ENCODE measurements at regions of chr7 and their contacts with region 1.

Region 1: GRCh38 chr7:111474723-111475418 is 87.4 kb downstream of the IMMP2L start:
- DNase-seq: peak; percentile 77 to 94 (median 88)
- ATAC-seq: peak; percentile 78
- H3K4me3 ChIP-seq: no peak overlapping the region
- H3K27ac ChIP-seq: peak overlapping the region; percentile 68
- H3K4me1 ChIP-seq: peaks cover 6 to 47% of the 10 kb centered on the region in 2 experiments; a peak in 4 of 5 replicates
- H3K27me3 ChIP-seq: no peaks in the 10 kb centered on the region
- CTCF ChIP-seq: no peak
- EP300 ChIP-seq: peak; percentile 99
- POLR2A ChIP-seq: no peak
- RAD21 ChIP-seq: 0 out of 4 replicates have a peak, but pooled peaks of 1 of the 2 experiments have one; percentile 14

Region 2: GRCh38 chr7:111229916-111230315 is 245.0 kb before region 1 on chr7:
- CTCF ChIA-PET with region 1: no interaction called
- POLR2A ChIA-PET with region 1: no interaction called
- in situ Hi-C with region 1: no loop called
- intact Hi-C with region 1: loop called (anchors 5 kb)
- DNase-seq: no peak
- ATAC-seq: no peak
- H3K4me3 ChIP-seq: no peak overlapping the region
- H3K27ac ChIP-seq: no peak overlapping the region
- H3K4me1 ChIP-seq: peaks cover 0 to 21% of the 10 kb centered on the region in 2 experiments; a peak in 3 of 5 replicates
- H3K27me3 ChIP-seq: no peaks in the 10 kb centered on the region
- CTCF ChIP-seq: no peak
- EP300 ChIP-seq: no peak
- POLR2A ChIP-seq: no peak
- RAD21 ChIP-seq: no peak

Region 3: GRCh38 chr7:111329367-111330234 is 145.3 kb before region 1 on chr7:
- CTCF ChIA-PET with region 1: no interaction called
- POLR2A ChIA-PET with region 1: interaction called, 3 read pairs
- in situ Hi-C with region 1: no loop called
- intact Hi-C with region 1: loop called (anchors 2 kb)
- DNase-seq: peak in 2 of 4 experiments; percentile 41 to 64
- ATAC-seq: peak; percentile 82
- H3K4me3 ChIP-seq: peak overlapping the region; percentile 24
- H3K27ac ChIP-seq: peak overlapping the region; percentile 78
- H3K4me1 ChIP-seq: peaks cover 0 to 4% of the 10 kb centered on the region in 2 experiments; a peak in 1 of 5 replicates
- H3K27me3 ChIP-seq: no peaks in the 10 kb centered on the region
- CTCF ChIP-seq: peak; percentile 31 to 74 (median 45); a peak in 5 of 6 replicates
- EP300 ChIP-seq: peak; percentile 33; the same call in 1 of the 2 replicates
- POLR2A ChIP-seq: no peak
- RAD21 ChIP-seq: peak; percentile 83 to 91

Region 4: DNA sequence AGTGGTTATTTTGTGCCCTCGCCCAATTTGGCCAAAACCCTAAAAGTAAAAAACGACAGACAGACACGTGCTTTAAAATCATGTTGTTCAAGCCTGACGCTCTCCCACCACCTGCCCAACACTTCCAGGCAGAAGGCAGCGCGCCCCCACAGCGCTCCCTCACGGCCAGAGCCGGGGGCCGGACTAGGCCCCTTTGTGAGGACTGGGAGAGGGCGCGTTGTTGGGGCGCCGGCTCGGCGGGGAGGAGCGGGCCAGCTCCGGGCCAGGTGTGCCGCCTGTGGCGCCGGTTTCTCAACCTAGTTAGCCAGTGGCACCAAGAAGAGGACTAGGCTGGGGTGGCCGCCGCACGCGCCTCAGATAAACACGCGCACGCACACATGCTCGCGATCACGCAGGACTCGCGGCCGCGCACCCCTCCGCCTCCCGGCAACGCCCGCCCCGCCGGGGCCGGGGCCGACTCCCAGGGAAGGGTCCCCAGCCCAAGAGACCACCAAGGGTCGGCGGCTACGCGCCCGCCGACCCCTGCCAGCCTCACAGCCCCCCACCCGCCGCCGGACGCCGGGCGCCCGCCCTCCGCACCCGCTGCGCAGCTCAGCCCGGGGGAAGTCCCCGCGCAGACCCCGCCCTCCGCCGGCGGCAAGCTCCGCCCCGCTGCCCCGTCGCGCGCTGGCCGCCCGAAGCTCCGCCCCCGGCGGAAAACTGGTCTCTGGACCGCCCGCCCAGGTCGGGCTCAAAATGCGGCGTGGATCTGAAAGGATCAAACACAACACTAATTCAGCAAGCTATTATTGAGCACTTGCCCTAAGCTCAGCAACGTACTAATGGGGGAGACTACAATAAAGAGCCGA is 87.2 kb after region 1 on chr7 and contains the start of gene IMMP2L:
- CTCF ChIA-PET with region 1: no interaction called
- POLR2A ChIA-PET with region 1: no interaction called
- in situ Hi-C with region 1: no loop called
- intact Hi-C with region 1: loop called (anchors 1 kb)
- DNase-seq: peak; percentile 98 to 100 (median 100)
- ATAC-seq: peak; percentile 96
- H3K4me3 ChIP-seq: peak within 1 kb of the TSS; percentile 67
- H3K27ac ChIP-seq: peak within 1 kb of the TSS; percentile 85
- H3K4me1 ChIP-seq: peaks cover 6 to 19% of the 10 kb centered on the region in 2 experiments; a peak in 4 of 5 replicates
- H3K27me3 ChIP-seq: no peaks in the 10 kb centered on the region; a peak in 1 of 5 replicates
- CTCF ChIP-seq: peak; percentile 81 to 87 (median 84)
- EP300 ChIP-seq: peak; percentile 62
- POLR2A ChIP-seq: peak; percentile 84
- RAD21 ChIP-seq: peak; percentile 79 to 80
- polyA plus RNA-seq, gene IMMP2L: 112 to 116 TPM